ENCODE measurements at regions of chr13 and their contacts with region 1.

Region 1: DNA sequence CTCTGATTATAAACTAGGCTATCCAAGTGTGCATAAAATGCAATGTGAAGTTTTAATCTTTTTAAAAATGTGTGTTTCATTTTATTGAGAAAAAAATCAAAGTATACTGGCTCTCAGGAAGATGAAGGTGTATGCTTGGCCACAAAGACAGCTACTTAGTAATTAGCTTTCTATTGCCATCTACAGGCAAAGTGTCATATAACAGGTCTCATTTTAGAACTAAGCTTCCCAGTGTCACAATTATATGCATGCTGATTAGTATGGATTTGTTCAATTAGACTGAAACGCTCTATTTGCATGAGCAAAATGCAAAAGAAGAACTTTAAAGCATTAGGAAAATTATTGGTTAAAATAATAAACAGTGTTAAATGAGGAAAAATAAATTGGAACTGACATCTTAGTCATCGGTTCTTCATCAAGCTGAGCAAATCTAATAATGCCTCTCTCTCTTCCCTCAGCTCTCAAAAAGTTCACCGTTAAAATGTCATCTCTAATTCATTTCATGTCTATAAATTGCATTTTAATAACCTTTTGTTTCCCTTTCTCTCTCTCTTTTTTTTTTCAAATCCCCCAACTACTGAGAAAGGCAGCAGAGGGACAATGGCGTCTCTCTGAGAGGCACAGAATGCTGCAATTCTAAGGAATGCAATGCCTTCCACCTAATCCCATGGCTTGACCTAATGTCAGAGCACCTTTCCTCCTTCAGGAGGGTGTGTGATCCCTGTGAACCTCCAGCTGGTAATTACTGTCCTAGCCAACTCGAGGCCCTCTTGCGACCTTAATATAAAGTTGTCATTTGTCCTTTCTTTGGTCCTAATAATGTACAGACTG is 313.1 kb upstream of the MAB21L1 start:
- DNase-seq: peak; percentile 48
- H3K4me3 ChIP-seq: no peak overlapping the region
- H3K27ac ChIP-seq: no peak overlapping the region
- H3K4me1 ChIP-seq: no peaks in the 10 kb centered on the region
- H3K27me3 ChIP-seq: no peaks in the 10 kb centered on the region
- CTCF ChIP-seq: peak; percentile 34 to 45
- POLR2A ChIP-seq: no peak

Region 2: DNA sequence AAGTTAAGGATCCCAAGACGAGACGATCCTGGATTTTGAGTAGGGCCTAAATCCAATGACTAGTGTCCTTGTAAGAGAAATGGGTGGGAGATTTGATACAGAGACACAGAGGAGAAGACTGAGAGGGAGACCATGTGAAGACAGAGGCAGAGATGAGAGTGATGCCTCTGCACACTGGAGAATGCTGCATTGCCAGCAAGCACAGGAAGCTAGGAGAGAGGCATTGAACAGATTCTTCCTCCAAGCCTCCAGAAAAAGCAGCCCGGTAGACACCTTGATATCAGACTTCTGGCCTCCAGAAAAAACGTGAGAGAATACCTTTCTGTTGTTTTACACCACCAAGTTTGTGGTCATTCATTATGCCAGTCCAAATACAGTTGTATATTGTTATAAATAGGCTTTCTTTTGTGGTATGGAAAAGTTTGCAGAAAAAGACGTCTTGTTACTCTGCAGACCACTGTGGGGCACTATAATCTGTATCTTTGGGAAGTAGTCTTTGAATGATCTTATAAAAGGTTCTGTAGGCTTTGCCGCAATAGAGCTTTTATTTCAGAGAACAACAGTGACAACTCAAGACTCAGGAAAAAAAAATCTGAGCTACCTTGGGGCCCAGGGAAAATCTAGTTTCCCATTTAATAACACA is 1989.5 kb before region 1 on chr13:
- CTCF ChIA-PET with region 1: interaction called, 11 read pairs
- POLR2A ChIA-PET with region 1: no interaction called
- dilution Hi-C with region 1: no loop called
- intact Hi-C with region 1: no loop called
- DNase-seq: peak; percentile 67
- H3K4me3 ChIP-seq: no peak overlapping the region
- H3K27ac ChIP-seq: no peak overlapping the region
- H3K4me1 ChIP-seq: no peaks in the 10 kb centered on the region
- H3K27me3 ChIP-seq: peaks cover 0 to 7% of the 10 kb centered on the region in 2 experiments
- CTCF ChIP-seq: peak; percentile 24 to 37
- POLR2A ChIP-seq: no peak

Region 3: DNA sequence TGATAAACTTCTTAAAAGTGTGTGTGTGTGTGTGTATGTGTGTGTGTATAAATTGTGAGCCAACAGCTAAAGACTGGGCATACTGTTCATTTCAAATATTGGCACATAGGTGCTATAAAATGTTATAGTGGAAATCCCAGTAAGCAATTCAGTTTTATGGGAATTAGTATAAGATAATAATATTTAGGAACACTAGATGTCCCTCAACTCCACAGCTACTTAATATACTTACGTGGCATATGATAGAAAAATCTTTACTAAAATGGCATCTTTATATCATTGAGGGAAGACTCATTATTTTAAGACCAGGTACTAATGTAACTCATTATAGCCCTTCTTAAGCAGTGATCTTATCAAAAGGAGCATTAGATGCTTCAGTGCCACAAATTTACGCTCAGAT is 579.3 kb before region 1 on chr13:
- CTCF ChIA-PET with region 1: interaction called, 18 read pairs
- POLR2A ChIA-PET with region 1: no interaction called
- dilution Hi-C with region 1: no loop called
- intact Hi-C with region 1: no loop called
- DNase-seq: peak; percentile 34
- H3K4me3 ChIP-seq: no peak overlapping the region
- H3K27ac ChIP-seq: no peak overlapping the region
- H3K4me1 ChIP-seq: no peaks in the 10 kb centered on the region
- H3K27me3 ChIP-seq: no peaks in the 10 kb centered on the region
- CTCF ChIP-seq: no peak
- POLR2A ChIP-seq: no peak

Region 4: GRCh38 chr13:35630551-35631275 is 158.8 kb before region 1 on chr13:
- CTCF ChIA-PET with region 1: interaction called, 11 read pairs
- POLR2A ChIA-PET with region 1: no interaction called
- dilution Hi-C with region 1: no loop called
- intact Hi-C with region 1: no loop called
- DNase-seq: peak; percentile 13
- H3K4me3 ChIP-seq: no peak overlapping the region
- H3K27ac ChIP-seq: no peak overlapping the region
- H3K4me1 ChIP-seq: peaks cover 11% of the 10 kb centered on the region
- H3K27me3 ChIP-seq: no peaks in the 10 kb centered on the region
- CTCF ChIP-seq: peak; percentile 66 to 73
- POLR2A ChIP-seq: no peak

Region 5: GRCh38 chr13:35768551-35768950 is 21.0 kb before region 1 on chr13:
- CTCF ChIA-PET with region 1: interaction called, 12 read pairs
- POLR2A ChIA-PET with region 1: no interaction called
- dilution Hi-C with region 1: no loop called
- intact Hi-C with region 1: no loop called
- DNase-seq: no peak
- H3K4me3 ChIP-seq: no peak overlapping the region
- H3K27ac ChIP-seq: no peak overlapping the region
- H3K4me1 ChIP-seq: no peaks in the 10 kb centered on the region
- H3K27me3 ChIP-seq: peaks cover 0 to 2% of the 10 kb centered on the region in 2 experiments
- CTCF ChIP-seq: no peak
- POLR2A ChIP-seq: no peak

Region 6: DNA sequence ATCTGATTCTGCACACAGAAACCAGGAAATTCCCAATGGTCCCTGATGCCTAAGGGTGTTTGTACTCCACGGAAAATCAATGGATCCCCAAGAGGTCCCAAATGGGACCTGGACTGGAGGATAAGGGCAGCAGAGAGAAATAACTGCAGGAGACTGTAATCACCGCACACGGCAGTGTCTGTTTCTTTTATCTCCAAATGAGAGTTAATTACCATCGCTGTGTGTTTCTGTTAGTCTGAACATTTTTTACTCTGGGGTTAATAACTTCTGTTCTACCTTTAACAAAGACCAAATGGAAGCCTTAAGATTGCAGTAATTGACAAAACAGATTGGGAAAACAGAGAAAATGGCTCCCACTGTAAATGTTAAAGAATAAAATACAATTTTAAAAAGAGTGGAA is 20.8 kb after region 1 on chr13:
- CTCF ChIA-PET with region 1: interaction called, 60 read pairs
- POLR2A ChIA-PET with region 1: no interaction called
- dilution Hi-C with region 1: no loop called
- intact Hi-C with region 1: no loop called
- DNase-seq: no peak
- H3K4me3 ChIP-seq: no peak overlapping the region
- H3K27ac ChIP-seq: no peak overlapping the region
- H3K4me1 ChIP-seq: no peaks in the 10 kb centered on the region
- H3K27me3 ChIP-seq: peaks cover 0 to 4% of the 10 kb centered on the region in 2 experiments
- CTCF ChIP-seq: no peak
- POLR2A ChIP-seq: no peak

Region 7: DNA sequence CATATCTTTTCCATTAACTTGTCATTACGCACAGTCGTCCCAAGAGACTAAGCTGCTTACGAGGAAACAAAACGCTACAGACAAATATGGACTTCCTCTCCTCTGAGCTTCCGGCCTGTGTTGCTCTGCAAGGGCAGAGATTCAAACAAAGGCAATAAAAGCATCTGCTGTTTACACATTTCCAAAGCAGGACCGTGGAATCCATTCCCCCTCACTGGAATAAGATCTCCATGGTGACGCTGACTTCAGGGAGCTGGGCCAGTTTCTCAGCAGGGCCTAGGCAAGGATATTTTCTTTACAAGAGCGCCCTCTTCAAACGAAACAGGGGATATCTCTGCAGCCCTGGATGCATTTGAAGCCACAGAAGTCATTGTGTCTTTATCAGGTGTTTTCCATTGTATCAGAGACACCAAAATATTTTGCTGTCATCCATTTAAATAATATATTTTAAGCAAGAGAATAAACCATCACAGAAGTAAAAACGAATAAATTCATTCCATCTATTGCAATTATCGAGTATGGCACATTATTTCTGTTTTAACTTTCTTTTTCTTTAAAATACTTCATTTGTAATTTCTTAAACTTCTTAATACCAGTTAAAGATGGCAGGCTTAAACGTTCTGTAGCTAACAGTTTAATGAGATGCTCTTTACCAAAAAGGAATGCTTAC is 164.1 kb after region 1 on chr13:
- CTCF ChIA-PET with region 1: interaction called, 22 read pairs
- POLR2A ChIA-PET with region 1: no interaction called
- dilution Hi-C with region 1: no loop called
- intact Hi-C with region 1: no loop called
- DNase-seq: peak; percentile 79
- H3K4me3 ChIP-seq: no peak overlapping the region
- H3K27ac ChIP-seq: no peak overlapping the region
- H3K4me1 ChIP-seq: no peaks in the 10 kb centered on the region
- H3K27me3 ChIP-seq: no peaks in the 10 kb centered on the region
- CTCF ChIP-seq: peak; percentile 54 to 57
- POLR2A ChIP-seq: no peak

Measured in endothelial cell of umbilical vein (primary cell).